Calu3 (cell line): ENCODE measurements at regions of chr2 and their contacts with region 1.

Region 1: GRCh38 chr2:218269899-218270720 is at the starts of genes AAMP and PNKD:
- DNase-seq: peak; percentile 100
- H3K4me3 Mint-ChIP-seq: peak within 1 kb of the TSS; percentile 76
- H3K27ac Mint-ChIP-seq: peak within 1 kb of the TSS; percentile 69
- H3K4me1 Mint-ChIP-seq: peaks cover 31% of the 10 kb centered on the region
- H3K27me3 Mint-ChIP-seq: no peaks in the 10 kb centered on the region
- CTCF ChIP-seq: peak; percentile 18
- total RNA-seq, gene AAMP: 102 and 117 TPM in 2 replicates
- total RNA-seq, gene PNKD: 46.8 and 54.0 TPM in 2 replicates

Region 2: DNA sequence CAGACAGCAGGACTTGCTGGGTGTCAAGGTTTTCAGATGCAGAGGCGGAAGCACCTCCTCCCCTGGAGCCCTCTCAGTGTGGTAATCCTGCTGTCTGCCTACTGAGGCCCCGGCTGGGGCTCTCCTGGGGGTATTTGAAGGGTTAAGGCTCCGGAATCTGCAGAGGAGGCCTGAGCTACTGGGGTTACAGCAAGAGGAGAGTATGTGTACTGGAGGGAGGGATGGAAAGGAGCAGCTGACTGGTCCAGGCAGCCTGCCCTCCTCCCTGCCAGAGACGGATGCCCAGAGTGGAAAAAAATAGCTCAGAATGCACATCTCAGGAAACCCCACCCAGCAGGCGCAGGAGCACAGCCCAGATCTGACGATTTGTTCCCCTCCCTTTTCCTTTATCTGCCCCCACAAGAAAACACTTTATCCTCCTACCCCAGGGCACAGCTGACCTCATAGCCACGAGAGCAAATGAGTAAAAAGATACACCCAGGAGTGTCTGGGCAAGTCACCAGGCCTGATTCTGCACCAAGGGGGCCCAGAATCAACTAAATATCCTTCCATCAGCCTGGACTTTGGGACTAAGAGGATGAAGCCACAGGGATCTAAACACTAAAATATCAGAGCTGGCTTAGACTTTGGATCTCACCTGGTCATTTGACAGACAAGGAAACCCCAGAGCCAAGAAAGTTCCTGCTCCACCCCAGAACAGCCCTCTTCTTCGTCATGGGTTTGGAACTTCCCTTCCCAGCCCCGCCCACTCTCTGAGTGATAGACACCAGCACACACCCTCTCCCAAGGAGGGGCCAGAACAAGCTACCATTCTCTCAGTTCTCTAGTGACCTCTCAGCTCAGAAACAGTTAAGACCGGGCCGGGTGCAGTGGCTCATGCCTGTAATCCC is 16.7 kb after region 1 on chr2:
- CTCF ChIA-PET with region 1: interaction called, 54 read pairs
- intact Hi-C with region 1: loop called (anchors 2 kb)
- DNase-seq: peak; percentile 94
- H3K4me3 Mint-ChIP-seq: peak overlapping the region; percentile 61
- H3K27ac Mint-ChIP-seq: peak overlapping the region; percentile 96
- H3K4me1 Mint-ChIP-seq: peaks cover 92% of the 10 kb centered on the region
- H3K27me3 Mint-ChIP-seq: no peaks in the 10 kb centered on the region
- CTCF ChIP-seq: no peak

Region 3: GRCh38 chr2:218292048-218293014 is 22.2 kb after region 1 on chr2 and contains the start of gene TMBIM1:
- CTCF ChIA-PET with region 1: interaction called, 54 read pairs
- intact Hi-C with region 1: loop called (anchors 2 kb)
- DNase-seq: peak; percentile 90
- H3K4me3 Mint-ChIP-seq: peak within 1 kb of the TSS; percentile 71
- H3K27ac Mint-ChIP-seq: peak within 1 kb of the TSS; percentile 78
- H3K4me1 Mint-ChIP-seq: peaks cover 81% of the 10 kb centered on the region
- H3K27me3 Mint-ChIP-seq: no peaks in the 10 kb centered on the region
- CTCF ChIP-seq: peak; percentile 91
- total RNA-seq, gene TMBIM1: 229 and 289 TPM in 2 replicates

Region 4: DNA sequence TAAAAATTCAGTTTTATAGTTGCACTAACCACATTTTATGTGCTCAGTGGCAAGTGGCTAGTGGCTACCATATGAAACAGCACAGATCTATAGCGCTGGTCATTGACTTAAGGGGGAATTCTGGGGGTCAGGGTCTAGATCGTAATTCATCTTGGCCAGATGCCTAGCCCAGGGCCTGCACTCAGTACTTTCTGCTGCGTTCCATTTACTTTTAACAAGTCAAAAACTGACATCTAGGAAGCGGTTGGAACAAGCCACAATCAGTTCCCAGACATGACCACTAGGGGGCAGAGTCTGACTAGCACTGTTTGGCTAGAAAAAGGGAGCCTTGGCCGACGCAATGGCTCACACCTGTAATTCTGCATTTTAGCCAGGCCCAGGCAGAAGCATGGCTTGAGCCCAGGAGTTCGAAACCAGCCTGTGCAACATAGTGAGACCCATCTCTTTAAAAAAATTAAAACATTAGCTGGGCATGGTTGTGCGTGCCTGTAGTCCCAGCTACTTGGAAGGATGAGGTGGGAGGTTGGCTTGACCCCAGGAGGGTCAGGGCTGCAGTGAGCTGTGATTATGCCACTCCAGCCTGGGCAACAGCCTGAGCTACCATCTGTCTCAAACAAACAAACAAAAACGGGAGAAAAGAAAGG is 31.2 kb after region 1 on chr2:
- CTCF ChIA-PET with region 1: interaction called, 11 read pairs
- intact Hi-C with region 1: no loop called
- DNase-seq: peak; percentile 91
- H3K4me3 Mint-ChIP-seq: no peak overlapping the region
- H3K27ac Mint-ChIP-seq: no peak overlapping the region
- H3K4me1 Mint-ChIP-seq: peaks cover 42% of the 10 kb centered on the region
- H3K27me3 Mint-ChIP-seq: no peaks in the 10 kb centered on the region
- CTCF ChIP-seq: peak; percentile 98

Region 5: DNA sequence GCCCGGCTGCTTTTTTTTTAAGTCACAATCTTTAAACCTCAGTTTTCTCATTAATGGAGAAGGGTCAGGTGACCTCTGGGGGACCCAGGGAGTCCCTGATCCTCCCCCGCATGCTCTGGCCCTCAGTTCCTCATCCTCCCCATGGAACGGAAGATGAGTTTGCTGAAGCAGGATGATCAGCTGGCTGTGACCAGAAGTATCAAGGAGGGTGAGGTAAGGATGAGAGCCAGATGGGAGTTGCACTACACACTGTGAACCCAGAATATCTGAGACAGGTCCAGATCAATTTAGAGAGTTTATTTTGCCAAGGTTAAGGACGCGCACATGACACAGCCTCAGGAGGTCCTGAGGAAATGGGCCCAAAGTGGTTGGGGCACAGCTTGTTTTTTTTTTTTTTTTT is 90.3 kb after region 1 on chr2:
- CTCF ChIA-PET with region 1: interaction called, 12 read pairs
- intact Hi-C with region 1: no loop called
- DNase-seq: no peak
- H3K4me3 Mint-ChIP-seq: no peak overlapping the region
- H3K27ac Mint-ChIP-seq: no peak overlapping the region
- H3K4me1 Mint-ChIP-seq: peaks cover 10% of the 10 kb centered on the region
- H3K27me3 Mint-ChIP-seq: no peaks in the 10 kb centered on the region
- CTCF ChIP-seq: no peak

Region 6: DNA sequence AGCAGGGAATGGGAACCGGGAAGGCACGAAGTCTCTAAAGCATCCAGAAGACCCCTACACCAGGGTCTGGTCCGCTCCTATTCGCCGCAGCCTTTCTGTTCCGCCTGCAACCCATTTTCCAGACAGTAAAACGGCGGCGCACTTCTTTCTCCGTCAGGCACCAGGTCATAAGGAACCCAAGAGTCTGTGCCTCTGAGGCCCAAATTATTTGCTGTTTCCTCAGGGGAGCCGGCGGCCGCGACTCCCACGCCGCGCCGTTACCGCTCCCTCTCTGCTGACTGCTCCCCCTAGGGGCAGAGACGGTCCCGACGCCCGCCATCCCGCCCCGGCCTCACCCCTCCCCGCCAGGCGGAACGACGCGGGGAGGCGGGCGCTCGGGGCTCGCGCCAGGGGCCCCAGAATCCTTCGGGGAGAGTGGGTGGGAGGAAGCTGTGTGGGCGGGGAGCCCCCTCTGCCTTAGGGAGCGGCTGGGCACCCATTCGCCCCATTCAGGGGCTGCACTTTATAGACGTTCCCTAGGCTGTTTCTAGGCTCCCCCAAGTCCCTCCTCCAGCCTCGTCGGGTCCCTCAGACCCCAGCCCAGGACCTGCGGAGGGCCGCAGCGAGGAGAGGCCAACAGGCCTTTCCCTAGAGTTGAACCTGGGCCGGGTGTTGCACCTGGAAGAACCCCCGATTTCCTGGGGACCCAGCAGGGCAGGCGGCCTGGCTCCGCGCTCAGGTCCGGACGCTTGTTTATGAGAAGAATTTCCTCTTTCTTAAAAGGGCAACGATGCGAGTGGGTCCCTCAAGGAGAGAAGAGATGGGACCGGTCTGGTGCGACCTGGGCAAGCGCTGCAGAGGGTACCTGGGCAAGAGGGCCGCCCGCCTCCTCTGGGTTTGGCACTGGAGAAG is 125.9 kb after region 1 on chr2:
- CTCF ChIA-PET with region 1: interaction called, 8 read pairs
- intact Hi-C with region 1: loop called (anchors 5 kb)
- DNase-seq: peak; percentile 96
- H3K4me3 Mint-ChIP-seq: peak overlapping the region; percentile 98
- H3K27ac Mint-ChIP-seq: peak overlapping the region; percentile 78
- H3K4me1 Mint-ChIP-seq: peaks cover 26% of the 10 kb centered on the region
- H3K27me3 Mint-ChIP-seq: no peaks in the 10 kb centered on the region
- CTCF ChIP-seq: peak; percentile 97